ENCODE measurements at regions of chr13 and their contacts with region 1.

Region 1: DNA sequence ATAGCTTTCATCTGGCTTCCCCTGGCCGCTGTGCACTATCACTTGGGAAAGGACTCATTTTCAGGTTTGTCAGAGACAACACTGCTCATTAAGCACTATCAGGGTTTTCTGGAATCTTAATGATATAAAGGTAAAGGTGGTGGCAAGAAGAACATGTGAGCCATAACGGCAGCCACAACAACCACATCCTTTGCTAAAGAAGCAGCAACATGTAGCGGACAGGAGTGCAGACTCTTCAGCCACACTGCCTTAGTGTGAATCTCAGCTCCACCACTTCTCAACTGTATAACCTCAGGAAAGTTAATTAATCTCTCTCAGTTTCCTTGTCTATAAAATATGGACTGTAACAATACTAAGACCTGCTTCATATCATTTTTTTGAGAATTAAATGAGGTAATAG is 24.1 kb upstream of the MIR17HG start:
- DNase-seq: no peak
- H3K4me3 ChIP-seq: no peak overlapping the region
- H3K27ac ChIP-seq: no peak overlapping the region
- H3K4me1 ChIP-seq: no peaks in the 10 kb centered on the region
- H3K27me3 ChIP-seq: no peaks in the 10 kb centered on the region
- CTCF ChIP-seq: no peak

Region 2: DNA sequence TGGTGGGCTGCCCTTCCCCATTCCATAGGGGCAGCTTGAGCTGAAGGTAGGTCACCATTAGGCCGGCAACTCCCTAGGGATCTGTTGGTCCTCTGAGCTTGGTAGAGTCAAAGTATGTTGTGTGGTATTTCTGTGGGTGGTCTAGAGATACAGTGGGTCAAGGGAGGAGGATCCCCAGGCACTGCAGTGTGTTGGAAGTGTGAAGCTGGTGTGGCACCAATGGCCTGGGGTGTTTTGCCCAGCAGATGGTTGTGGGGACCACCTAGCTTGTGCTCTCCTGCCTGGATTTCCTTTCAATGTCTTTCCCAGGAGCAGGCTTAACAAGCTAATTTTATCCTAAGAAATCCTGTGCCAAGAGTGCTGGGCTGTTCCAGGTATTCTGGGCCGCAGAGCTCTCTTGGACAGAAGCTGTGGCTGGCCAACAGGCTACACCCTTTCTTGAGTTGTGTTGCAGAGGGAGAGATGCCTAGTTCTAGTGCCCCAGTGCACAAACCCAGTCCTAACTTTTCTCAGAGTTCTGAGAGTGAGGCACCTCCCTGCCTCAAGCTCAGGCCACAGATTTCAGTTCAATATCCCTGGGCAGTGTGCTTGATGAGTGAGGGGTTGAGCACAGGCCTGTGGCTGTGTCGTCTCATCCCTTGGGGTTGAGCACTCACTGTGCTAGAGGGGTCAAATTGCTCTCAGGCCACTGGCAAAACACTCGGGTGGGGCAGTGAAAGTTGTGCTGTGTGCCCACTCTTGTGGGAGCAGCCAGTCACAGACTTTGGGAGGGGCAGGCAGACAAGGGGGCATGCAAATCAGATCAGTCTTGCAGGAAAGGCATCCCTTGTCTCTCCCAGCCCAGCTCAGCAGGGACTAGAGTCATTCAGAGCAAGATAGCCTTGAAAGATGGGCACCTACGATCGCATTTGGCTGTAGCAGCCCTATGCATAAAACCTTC is 1782.0 kb before region 1 on chr13:
- CTCF ChIA-PET with region 1: no interaction called
- dilution Hi-C with region 1: no loop called
- in situ Hi-C with region 1: no loop called
- intact Hi-C with region 1: no loop called
- DNase-seq: no peak
- H3K4me3 ChIP-seq: no peak overlapping the region
- H3K27ac ChIP-seq: no peak overlapping the region
- H3K4me1 ChIP-seq: no peaks in the 10 kb centered on the region
- H3K27me3 ChIP-seq: no peaks in the 10 kb centered on the region
- CTCF ChIP-seq: no peak

Region 3: DNA sequence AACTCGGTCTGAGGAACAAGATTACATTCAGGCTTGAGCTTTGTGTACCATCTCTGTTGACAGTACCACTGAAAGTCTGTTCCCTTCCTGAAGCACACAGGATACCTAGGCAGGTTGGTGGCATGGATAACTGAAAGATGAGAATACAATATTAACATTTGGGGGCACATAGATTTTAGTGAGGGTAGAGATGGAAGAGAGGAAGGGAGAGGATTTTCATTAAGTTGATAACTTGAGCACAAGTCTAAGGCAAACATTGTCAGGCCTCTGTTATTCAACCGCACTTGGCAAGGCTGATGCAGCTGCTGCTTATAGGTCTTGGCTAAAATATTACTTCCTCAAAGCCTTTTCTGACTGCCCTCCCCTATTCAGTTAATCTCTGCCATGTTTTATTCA is 35.0 kb after region 1 on chr13:
- CTCF ChIA-PET with region 1: no interaction called
- dilution Hi-C with region 1: loop called (anchors 5 kb)
- in situ Hi-C with region 1: no loop called
- intact Hi-C with region 1: no loop called
- DNase-seq: no peak
- H3K4me3 ChIP-seq: no peak overlapping the region
- H3K27ac ChIP-seq: no peak overlapping the region
- H3K4me1 ChIP-seq: no peaks in the 10 kb centered on the region
- H3K27me3 ChIP-seq: no peaks in the 10 kb centered on the region
- CTCF ChIP-seq: no peak

Region 4: DNA sequence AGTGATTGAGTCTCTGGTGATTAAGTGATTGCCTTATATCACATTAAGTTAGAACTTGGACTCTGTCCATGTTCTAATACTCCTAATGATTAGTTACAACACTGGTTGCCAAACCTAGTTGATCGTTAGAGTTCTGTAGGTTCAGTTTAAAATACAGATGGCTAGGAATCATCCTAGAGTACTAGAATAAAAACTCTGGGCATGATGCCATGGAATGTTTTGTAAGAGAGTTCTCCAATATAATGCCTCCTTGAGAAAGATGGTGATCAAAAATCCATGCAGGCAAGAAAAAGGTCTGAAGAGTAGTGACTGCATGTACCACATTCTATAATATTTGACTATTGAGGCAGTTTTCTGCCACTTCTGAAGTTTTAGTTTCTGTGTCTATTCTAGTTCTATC is 251.4 kb after region 1 on chr13:
- CTCF ChIA-PET with region 1: no interaction called
- dilution Hi-C with region 1: no loop called
- in situ Hi-C with region 1: no loop called
- intact Hi-C with region 1: no loop called
- DNase-seq: no peak
- H3K4me3 ChIP-seq: no peak overlapping the region
- H3K27ac ChIP-seq: no peak overlapping the region
- H3K4me1 ChIP-seq: no peaks in the 10 kb centered on the region
- H3K27me3 ChIP-seq: no peaks in the 10 kb centered on the region
- CTCF ChIP-seq: no peak

Measured in mammary epithelial cell (primary cell).